Activated CD4-positive, alpha-beta T cell treated with anti-CD3 and anti-CD28 coated beads for 36 hours (primary cell): ENCODE measurements at regions of chr16 and their contacts with region 1.

Region 1: GRCh38 chr16:70348991-70349390 is 2.3 kb downstream of the DDX19A start:
- DNase-seq: no peak
- ATAC-seq: no peak
- H3K4me3 Mint-ChIP-seq: no peak overlapping the region
- H3K27ac Mint-ChIP-seq: no peak overlapping the region
- H3K4me1 Mint-ChIP-seq: peaks cover 36% of the 10 kb centered on the region
- H3K27me3 Mint-ChIP-seq: no peaks in the 10 kb centered on the region

Region 2: GRCh38 chr16:70251629-70252354 is 97.2 kb before region 1 on chr16 and contains the start of gene EXOSC6:
- CTCF ChIA-PET with region 1: interaction called, 5 read pairs
- POLR2A ChIA-PET with region 1: interaction called, 3 read pairs
- intact Hi-C with region 1: loop called in 1 of 2 experiments (anchors 1 kb)
- DNase-seq: peak; percentile 96
- ATAC-seq: peak; percentile 94
- H3K4me3 Mint-ChIP-seq: peak within 1 kb of the TSS; percentile 85
- H3K27ac Mint-ChIP-seq: peak within 1 kb of the TSS; percentile 84
- H3K4me1 Mint-ChIP-seq: peaks cover 16% of the 10 kb centered on the region
- H3K27me3 Mint-ChIP-seq: no peaks in the 10 kb centered on the region
- total RNA-seq, gene EXOSC6: 18.7 to 23.5 TPM

Region 3: GRCh38 chr16:70289229-70290098 is 59.5 kb before region 1 on chr16 and contains the start of gene AARS1:
- CTCF ChIA-PET with region 1: interaction called, 4 read pairs
- POLR2A ChIA-PET with region 1: interaction called, 21 read pairs
- intact Hi-C with region 1: loop called (anchors 1 to 2 kb)
- DNase-seq: peak; percentile 96
- ATAC-seq: peak; percentile 99
- H3K4me3 Mint-ChIP-seq: peak within 1 kb of the TSS; percentile 92
- H3K27ac Mint-ChIP-seq: peak within 1 kb of the TSS; percentile 96
- H3K4me1 Mint-ChIP-seq: peaks cover 37% of the 10 kb centered on the region
- H3K27me3 Mint-ChIP-seq: no peaks in the 10 kb centered on the region
- total RNA-seq, gene AARS1: 180 to 189 TPM

Region 4: GRCh38 chr16:70298988-70299938 is 49.7 kb before region 1 on chr16 and contains the start of gene DDX19B:
- CTCF ChIA-PET with region 1: interaction called, 4 read pairs
- POLR2A ChIA-PET with region 1: interaction called, 27 read pairs
- intact Hi-C with region 1: loop called (anchors 1 to 2 kb)
- DNase-seq: peak; percentile 83
- ATAC-seq: peak; percentile 91
- H3K4me3 Mint-ChIP-seq: peak within 1 kb of the TSS; percentile 91
- H3K27ac Mint-ChIP-seq: peak within 1 kb of the TSS; percentile 96
- H3K4me1 Mint-ChIP-seq: peaks cover 32% of the 10 kb centered on the region
- H3K27me3 Mint-ChIP-seq: no peaks in the 10 kb centered on the region
- total RNA-seq, gene DDX19B: 32.3 to 34.7 TPM

Region 5: DNA sequence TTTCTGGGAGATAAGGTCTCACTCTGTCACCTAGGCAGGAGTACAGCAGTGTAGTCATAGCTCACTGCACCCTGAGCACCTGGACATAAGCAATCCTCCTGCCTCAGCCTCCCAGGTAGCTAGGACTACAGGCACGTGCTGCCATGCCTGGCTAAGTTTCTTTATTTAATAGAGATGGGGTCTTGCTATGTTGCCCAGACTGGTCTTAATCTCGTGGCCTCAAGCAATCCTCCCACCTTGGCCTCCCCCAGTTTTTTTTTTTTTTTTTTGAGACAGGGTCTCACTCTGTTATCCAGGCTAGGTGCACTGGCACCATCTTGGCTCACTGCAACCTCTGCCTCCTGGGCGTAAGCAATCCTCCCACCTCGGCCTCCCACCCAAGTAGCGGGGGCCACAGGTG is 28.9 kb before region 1 on chr16:
- CTCF ChIA-PET with region 1: no interaction called
- POLR2A ChIA-PET with region 1: no interaction called
- intact Hi-C with region 1: no loop called
- DNase-seq: no peak
- ATAC-seq: no peak
- H3K4me3 Mint-ChIP-seq: no peak overlapping the region
- H3K27ac Mint-ChIP-seq: no peak overlapping the region
- H3K4me1 Mint-ChIP-seq: no peaks in the 10 kb centered on the region
- H3K27me3 Mint-ChIP-seq: no peaks in the 10 kb centered on the region

Region 6: DNA sequence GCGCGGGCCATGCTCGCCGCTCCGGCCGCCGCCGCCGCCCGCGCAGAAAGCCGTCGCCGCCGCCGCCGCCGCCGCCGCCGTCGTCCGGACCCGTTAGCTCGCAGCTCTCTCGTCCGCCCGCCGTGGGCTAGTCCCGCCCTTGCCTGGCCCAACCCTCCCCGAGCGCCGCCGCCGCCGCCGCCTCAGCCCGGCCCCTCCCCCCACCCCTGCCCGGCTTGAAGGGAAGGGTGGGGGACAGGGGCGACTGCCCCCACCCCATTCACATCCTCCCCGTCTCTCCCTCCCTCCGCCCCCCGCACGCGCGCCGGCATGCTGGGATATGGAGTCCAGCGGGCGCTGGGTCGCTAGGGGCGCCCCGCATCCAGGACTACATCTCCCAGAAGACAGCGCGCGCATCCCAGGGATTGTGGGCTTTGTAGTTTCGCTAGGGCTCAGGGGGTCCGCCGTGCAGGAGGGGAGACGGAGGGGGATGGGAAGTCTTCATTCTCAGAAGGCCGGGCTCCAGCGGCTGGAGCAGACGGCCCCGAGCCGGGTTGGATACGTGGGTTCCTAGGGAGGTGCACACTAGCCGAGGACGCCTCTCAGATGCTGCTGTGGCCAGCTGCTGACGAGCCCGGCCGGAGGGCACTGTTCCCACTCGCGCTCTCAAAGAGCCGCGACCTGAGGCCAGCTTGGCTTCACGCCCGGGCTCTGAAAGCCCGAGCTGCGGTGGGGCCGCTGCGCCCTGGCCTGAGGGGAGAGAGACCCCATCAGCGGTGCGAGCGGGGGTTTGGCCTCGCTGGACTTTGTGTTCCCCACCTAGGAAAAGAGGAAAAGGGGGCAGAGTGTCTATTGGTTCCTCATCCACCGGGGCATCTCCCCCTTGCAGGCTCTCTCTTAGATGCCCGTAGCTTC is 90.2 kb after region 1 on chr16 and contains the start of gene ST3GAL2:
- CTCF ChIA-PET with region 1: no interaction called
- POLR2A ChIA-PET with region 1: interaction called, 3 read pairs
- intact Hi-C with region 1: loop called in 1 of 2 experiments (anchors 1 kb)
- DNase-seq: peak; percentile 97
- ATAC-seq: peak; percentile 97
- H3K4me3 Mint-ChIP-seq: peak within 1 kb of the TSS; percentile 96
- H3K27ac Mint-ChIP-seq: peak within 1 kb of the TSS; percentile 89
- H3K4me1 Mint-ChIP-seq: peaks cover 33% of the 10 kb centered on the region
- H3K27me3 Mint-ChIP-seq: no peaks in the 10 kb centered on the region
- total RNA-seq, gene ST3GAL2: 14.8 to 16.6 TPM

Region 7: GRCh38 chr16:70454222-70455034 is 105.4 kb after region 1 on chr16 and contains the start of gene FCSK:
- CTCF ChIA-PET with region 1: no interaction called
- POLR2A ChIA-PET with region 1: interaction called, 6 read pairs
- intact Hi-C with region 1: loop called in 1 of 2 experiments (anchors 1 kb)
- DNase-seq: peak; percentile 79
- ATAC-seq: peak; percentile 94
- H3K4me3 Mint-ChIP-seq: peak within 1 kb of the TSS; percentile 85
- H3K27ac Mint-ChIP-seq: peak within 1 kb of the TSS; percentile 88
- H3K4me1 Mint-ChIP-seq: peaks cover 16% of the 10 kb centered on the region
- H3K27me3 Mint-ChIP-seq: no peaks in the 10 kb centered on the region
- total RNA-seq, gene FCSK: 10.3 to 13.4 TPM